HCT116 (cell line): ENCODE measurements at regions of chr6 and their contacts with region 1.

Region 1: DNA sequence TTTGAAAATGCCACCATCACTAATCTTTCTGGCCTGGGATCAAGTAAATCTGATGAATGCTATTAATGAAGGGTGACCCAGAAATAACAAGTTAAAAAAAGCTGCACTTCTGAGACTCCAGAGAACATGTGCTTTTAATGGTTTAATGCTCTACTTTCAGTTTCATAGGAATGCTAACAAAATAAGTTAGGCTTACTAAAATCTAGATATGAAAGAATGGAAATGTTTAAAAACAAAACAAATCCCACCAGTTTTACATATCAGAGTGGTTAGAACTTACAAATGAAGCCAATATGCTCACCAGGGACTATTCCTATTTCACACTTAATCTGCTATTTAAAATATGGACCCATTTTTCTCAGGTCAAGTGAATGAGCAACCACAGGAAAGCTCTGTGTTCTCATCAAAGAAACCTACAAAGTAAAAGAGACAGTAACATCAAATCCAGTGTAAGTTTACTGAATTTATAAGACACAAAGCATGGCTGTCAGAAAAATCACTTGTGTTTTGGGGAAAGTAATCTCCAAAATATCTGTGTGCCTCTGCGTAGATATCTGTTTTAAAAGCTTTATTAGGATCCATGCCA is 40.3 kb downstream of the FYN start:
- DNase-seq: no peak
- ATAC-seq: no peak
- H3K4me3 ChIP-seq: no peak overlapping the region
- H3K27ac ChIP-seq: no peak overlapping the region
- H3K4me1 ChIP-seq: no peaks in the 10 kb centered on the region
- H3K27me3 ChIP-seq: no peaks in the 10 kb centered on the region
- CTCF ChIP-seq: no peak
- POLR2A ChIP-seq: no peak
- RAD21 ChIP-seq: no peak

Region 2: GRCh38 chr6:111759836-111760785 is 72.8 kb before region 1 on chr6:
- CTCF ChIA-PET with region 1: no interaction called
- POLR2A ChIA-PET with region 1: no interaction called
- RAD21 ChIA-PET with region 1: no interaction called
- intact Hi-C with region 1: loop called (anchors 5 kb)
- DNase-seq: no peak
- ATAC-seq: no peak
- H3K4me3 ChIP-seq: no peak overlapping the region
- H3K27ac ChIP-seq: no peak overlapping the region
- H3K4me1 ChIP-seq: no peaks in the 10 kb centered on the region
- H3K27me3 ChIP-seq: no peaks in the 10 kb centered on the region
- CTCF ChIP-seq: no peak
- POLR2A ChIP-seq: no peak
- RAD21 ChIP-seq: no peak